Mammary epithelial cell (primary cell): ENCODE measurements at regions of chr15 and their contacts with region 1.

Region 1: DNA sequence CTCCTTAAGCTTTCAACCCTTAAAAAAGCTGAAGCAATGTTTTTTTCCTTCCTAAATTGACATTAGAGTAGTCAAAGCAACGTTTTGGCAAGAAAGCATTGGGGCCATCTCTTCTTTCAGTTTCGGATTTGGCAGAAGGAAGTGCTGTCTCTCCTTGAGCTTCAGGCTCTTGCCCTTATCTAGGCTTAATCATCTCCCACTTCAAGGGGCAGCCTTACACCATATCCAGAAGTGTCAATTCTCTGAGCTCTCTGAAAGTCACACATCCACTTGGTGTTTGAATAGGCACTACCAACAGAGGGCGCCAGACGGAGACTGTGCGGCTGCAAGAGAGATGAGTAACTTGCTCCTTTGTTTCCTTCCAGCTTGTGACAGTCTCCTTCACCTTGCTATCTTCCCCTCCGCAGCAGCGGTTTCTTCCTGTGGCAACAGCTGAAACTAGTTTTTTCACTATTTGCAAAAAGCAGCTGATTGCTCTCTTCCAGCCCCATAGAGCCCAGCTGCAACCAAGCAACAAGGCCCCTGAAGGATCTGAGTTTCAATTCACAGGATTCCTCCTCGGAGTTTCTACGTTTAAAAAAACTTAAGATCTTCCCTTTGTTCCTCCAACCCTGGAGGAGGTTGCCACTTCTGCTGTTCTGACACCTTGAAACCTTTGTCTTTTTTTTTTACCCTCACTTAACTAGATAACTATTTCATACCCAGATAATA is 147.0 kb upstream of the SLCO3A1 start:
- DNase-seq: peak; percentile 75
- H3K4me3 ChIP-seq: no peak overlapping the region
- H3K27ac ChIP-seq: no peak overlapping the region
- H3K4me1 ChIP-seq: peaks cover 13% of the 10 kb centered on the region
- H3K27me3 ChIP-seq: peaks cover 3% of the 10 kb centered on the region
- CTCF ChIP-seq: peak; percentile 99

Region 2: GRCh38 chr15:91413142-91413541 is 293.3 kb before region 1 on chr15:
- CTCF ChIA-PET with region 1: no interaction called
- dilution Hi-C with region 1: no loop called
- in situ Hi-C with region 1: no loop called
- intact Hi-C with region 1: no loop called
- DNase-seq: peak; percentile 20
- H3K4me3 ChIP-seq: no peak overlapping the region
- H3K27ac ChIP-seq: no peak overlapping the region
- H3K4me1 ChIP-seq: peaks cover 5% of the 10 kb centered on the region
- H3K27me3 ChIP-seq: no peaks in the 10 kb centered on the region
- CTCF ChIP-seq: no peak

Region 3: DNA sequence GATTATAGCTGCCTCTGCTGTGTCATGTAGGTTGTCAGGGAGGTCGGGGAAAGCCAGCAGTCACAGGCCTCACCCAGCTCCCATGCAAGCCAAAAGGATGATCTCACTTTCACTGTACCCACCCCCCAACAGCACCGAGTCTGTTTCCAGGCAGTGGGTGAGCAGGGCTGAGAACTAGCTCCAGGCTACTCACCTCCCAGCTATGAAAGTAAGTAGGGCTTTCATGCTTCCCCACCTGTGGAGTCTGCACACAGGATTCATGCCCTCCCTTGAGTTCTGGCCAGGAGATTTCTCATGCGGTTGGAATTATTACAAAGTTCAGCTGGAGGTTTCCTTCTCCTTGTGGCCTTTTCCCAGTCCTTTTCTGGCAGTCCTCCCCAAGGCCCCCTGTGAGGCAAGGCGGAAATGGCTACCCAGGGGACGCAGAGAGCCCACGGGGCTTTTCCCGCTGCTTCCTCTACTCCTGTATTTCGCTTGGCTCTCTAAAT is 250.2 kb before region 1 on chr15:
- CTCF ChIA-PET with region 1: no interaction called
- dilution Hi-C with region 1: no loop called
- in situ Hi-C with region 1: no loop called
- intact Hi-C with region 1: no loop called
- DNase-seq: peak; percentile 100
- H3K4me3 ChIP-seq: no peak overlapping the region
- H3K27ac ChIP-seq: peak overlapping the region; percentile 92
- H3K4me1 ChIP-seq: peaks cover 18% of the 10 kb centered on the region
- H3K27me3 ChIP-seq: no peaks in the 10 kb centered on the region
- CTCF ChIP-seq: no peak

Region 4: GRCh38 chr15:91678003-91678402 is 28.5 kb before region 1 on chr15:
- CTCF ChIA-PET with region 1: no interaction called
- dilution Hi-C with region 1: no loop called
- in situ Hi-C with region 1: no loop called
- intact Hi-C with region 1: loop called (anchors 1 kb)
- DNase-seq: no peak
- H3K4me3 ChIP-seq: no peak overlapping the region
- H3K27ac ChIP-seq: no peak overlapping the region
- H3K4me1 ChIP-seq: no peaks in the 10 kb centered on the region
- H3K27me3 ChIP-seq: no peaks in the 10 kb centered on the region
- CTCF ChIP-seq: no peak

Region 5: GRCh38 chr15:91807122-91807521 is 100.6 kb after region 1 on chr15:
- CTCF ChIA-PET with region 1: no interaction called
- dilution Hi-C with region 1: no loop called
- in situ Hi-C with region 1: no loop called
- intact Hi-C with region 1: no loop called
- DNase-seq: no peak
- H3K4me3 ChIP-seq: no peak overlapping the region
- H3K27ac ChIP-seq: no peak overlapping the region
- H3K4me1 ChIP-seq: no peaks in the 10 kb centered on the region
- H3K27me3 ChIP-seq: peaks cover 4% of the 10 kb centered on the region
- CTCF ChIP-seq: no peak

Region 6: GRCh38 chr15:91852741-91853510 is 146.4 kb after region 1 on chr15:
- CTCF ChIA-PET with region 1: no interaction called
- dilution Hi-C with region 1: no loop called
- in situ Hi-C with region 1: no loop called
- intact Hi-C with region 1: loop called (anchors 1 kb)
- DNase-seq: peak; percentile 67
- H3K4me3 ChIP-seq: peak overlapping the region; percentile 72 to 77 (median 75)
- H3K27ac ChIP-seq: peak overlapping the region; percentile 70
- H3K4me1 ChIP-seq: peaks cover 26% of the 10 kb centered on the region
- H3K27me3 ChIP-seq: no peaks in the 10 kb centered on the region
- CTCF ChIP-seq: peak; percentile 36 to 66

Region 7: DNA sequence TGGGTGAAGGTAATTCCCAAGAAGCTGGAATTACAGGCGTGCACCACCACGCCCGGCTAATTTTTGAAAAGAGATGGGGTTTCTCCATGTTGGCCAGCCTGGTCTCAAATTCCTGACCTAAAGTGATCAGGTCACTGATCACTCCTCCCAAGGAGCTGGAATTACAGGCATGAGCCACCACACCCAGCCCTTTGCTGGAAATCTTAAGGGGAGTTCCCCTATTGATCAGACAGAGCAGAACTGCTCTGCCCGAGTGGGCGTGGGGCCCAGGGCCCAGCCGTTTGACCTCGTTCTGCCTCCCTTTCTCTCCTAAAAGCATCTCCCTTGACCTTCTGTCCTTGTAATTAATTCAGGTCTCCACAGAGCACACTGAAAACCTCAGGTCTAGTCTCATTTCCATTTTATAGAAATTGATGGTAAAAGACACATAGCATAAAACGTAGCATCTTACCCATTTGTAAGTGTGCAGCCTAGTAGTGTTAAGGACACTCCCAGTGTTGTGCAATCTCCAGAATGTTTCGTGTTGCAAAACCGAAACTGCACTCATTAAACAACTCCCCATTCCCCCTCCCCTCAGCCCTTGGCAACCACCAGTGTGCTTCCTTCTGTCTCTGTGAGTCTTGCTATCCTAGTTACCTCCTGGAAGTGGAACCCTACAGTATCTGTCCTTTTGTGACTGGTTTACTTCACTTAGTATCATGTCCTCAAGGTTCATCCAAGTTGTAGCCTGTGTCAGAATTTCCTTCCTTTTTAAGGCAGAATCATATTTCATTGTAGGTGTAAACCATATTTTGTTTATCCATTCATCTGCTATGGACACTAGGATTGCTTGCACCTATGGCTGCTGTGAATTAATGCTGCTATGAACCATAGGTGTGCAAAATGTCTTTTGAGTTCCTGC is 236.4 kb after region 1 on chr15:
- CTCF ChIA-PET with region 1: interaction called, 5 read pairs
- dilution Hi-C with region 1: no loop called
- in situ Hi-C with region 1: no loop called
- intact Hi-C with region 1: loop called (anchors 1 kb)
- DNase-seq: peak; percentile 99
- H3K4me3 ChIP-seq: peak overlapping the region in 1 of 3 experiments; percentile 5
- H3K27ac ChIP-seq: peak overlapping the region; percentile 96
- H3K4me1 ChIP-seq: peaks cover 58% of the 10 kb centered on the region
- H3K27me3 ChIP-seq: no peaks in the 10 kb centered on the region
- CTCF ChIP-seq: no peak

Region 8: GRCh38 chr15:91981821-91982801 is 275.6 kb after region 1 on chr15:
- CTCF ChIA-PET with region 1: no interaction called
- dilution Hi-C with region 1: no loop called
- in situ Hi-C with region 1: loop called in 1 of 2 experiments (anchors 25 kb)
- intact Hi-C with region 1: loop called (anchors 2 kb)
- DNase-seq: no peak
- H3K4me3 ChIP-seq: no peak overlapping the region
- H3K27ac ChIP-seq: no peak overlapping the region
- H3K4me1 ChIP-seq: peaks cover 9% of the 10 kb centered on the region
- H3K27me3 ChIP-seq: no peaks in the 10 kb centered on the region
- CTCF ChIP-seq: peak; percentile 29 to 62